Activated CD8-positive, alpha-beta memory T cell treated with anti-CD3 and anti-CD28 coated beads, Interleukin-2, amount 10 ng/mL, durations not matched to agents 7 days and 5 days (primary cell): ENCODE measurements at regions of chr15 and their contacts with region 1.

Region 1: DNA sequence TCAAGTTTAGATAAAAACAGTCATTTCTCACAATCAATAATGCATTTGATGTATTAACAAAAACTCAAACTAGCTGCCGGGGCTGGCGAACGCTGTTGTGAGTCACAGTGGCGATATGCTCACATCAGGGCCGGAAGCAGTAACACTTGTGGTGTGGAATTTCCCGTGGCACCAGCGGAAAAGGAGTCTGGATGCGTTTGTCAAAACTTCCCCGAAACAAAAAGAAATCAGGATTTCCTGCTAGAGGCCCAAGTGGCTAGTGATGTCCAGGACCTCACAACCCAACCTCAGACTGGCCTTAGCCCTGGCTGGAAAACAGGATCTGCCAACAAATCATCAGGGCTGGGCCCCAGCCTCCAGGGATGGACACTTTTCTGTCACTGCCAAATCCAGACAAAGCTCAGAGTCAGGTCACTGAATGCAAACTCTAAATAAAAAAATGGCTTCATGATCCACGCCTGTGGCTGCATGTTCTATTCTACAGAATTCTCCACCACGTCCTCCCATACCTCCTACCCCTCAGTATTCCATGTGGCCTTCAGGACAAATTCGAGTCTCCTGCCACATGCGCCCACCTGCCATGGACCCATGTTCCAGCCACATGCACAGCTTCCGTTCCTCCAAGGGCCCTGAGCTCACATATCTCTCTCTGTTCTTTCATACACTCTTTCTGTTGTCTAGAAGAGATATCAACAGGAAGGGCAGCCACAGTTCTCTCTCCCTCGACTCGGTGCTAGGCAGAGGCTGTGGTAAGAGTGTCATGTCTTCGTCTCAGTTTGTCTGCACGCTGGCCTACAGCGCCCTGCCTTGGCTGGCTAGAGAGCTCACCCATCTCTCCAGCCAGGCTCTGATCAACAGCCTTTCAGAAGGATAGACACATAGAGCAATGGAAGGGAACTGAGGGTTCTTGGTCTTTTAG is 35.4 kb downstream of the EHD4 start:
- DNase-seq: peak; percentile 89
- ATAC-seq: peak; percentile 82
- H3K4me3 Mint-ChIP-seq: peak overlapping the region; percentile 52
- H3K27ac Mint-ChIP-seq: peak overlapping the region; percentile 100
- H3K4me1 Mint-ChIP-seq: peaks cover 71% of the 10 kb centered on the region
- H3K27me3 Mint-ChIP-seq: no peaks in the 10 kb centered on the region

Region 2: DNA sequence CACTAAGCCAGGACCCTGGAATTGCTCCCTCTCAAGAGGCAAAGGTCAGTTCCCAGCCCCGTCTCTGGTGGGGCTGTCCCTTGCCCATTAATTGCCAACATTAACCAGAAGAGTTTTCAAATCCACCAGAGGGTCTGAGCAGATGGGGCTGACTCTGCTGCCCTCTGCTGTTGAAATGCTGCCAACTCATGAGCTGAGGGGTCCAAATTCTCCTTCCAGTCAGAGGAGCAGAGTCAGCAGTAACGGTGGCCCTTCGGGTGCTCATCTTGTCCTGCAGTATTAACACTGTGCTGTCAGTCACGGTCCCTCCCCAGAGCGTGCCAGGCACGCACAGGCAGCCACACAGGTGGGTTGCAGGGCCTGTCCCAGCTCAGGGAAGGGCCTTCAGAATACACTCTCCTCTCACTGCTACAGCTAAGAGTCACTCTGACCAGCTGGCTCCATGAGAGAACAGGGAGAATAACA is 32.3 kb before region 1 on chr15:
- CTCF ChIA-PET with region 1: interaction called, 21 read pairs
- DNase-seq: peak; percentile 80
- ATAC-seq: peak; percentile 92
- H3K4me3 Mint-ChIP-seq: no peak overlapping the region
- H3K27ac Mint-ChIP-seq: peak overlapping the region; percentile 74
- H3K4me1 Mint-ChIP-seq: peaks cover 18% of the 10 kb centered on the region
- H3K27me3 Mint-ChIP-seq: no peaks in the 10 kb centered on the region

Region 3: DNA sequence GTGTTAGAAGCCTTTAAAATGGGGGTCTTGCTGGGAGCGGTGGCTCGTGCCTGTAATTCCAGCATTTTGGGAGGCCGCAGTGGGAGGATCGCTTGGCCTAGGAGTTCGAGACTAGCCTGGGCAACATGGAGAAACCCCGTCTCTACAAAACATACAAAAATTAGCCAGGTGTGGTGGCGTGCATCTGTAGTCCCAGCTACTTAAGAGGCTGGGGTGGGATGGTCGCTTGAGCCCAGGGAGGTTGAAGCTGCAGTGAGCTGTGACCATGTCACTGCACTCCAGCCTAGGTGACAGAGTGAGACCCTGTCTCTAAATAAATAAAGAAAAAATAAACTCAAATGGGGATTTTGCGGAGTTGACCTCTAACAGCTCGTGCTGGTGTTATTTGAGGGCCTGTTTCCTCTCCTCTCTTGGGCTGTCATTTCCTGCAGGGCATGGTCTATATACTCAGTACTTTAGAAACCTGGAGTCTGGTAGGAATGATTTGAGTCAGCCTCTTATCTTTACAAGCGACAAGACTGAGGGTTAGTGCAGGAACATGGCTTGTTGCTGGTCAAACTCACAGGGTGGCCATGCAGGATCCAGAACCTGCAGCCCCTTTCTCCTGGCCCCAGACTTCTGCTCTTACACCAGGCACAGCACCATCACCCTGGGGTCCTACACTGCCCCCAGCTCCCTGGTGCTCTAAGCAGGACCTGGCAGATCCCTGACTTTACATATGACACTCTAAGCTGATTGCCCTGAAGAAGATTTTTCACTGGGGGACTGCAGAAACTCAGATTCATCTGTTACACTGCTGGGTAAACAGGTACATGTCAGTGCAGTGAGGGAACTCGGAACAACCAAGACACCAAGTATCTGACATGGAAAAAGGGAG is 20.4 kb after region 1 on chr15:
- CTCF ChIA-PET with region 1: interaction called, 12 read pairs
- DNase-seq: no peak
- ATAC-seq: peak; percentile 93
- H3K4me3 Mint-ChIP-seq: no peak overlapping the region
- H3K27ac Mint-ChIP-seq: peak overlapping the region; percentile 73
- H3K4me1 Mint-ChIP-seq: peaks cover 28% of the 10 kb centered on the region
- H3K27me3 Mint-ChIP-seq: no peaks in the 10 kb centered on the region

Region 4: GRCh38 chr15:41972253-41973242 is 35.6 kb after region 1 on chr15 and contains the start of gene EHD4:
- CTCF ChIA-PET with region 1: interaction called, 47 read pairs
- DNase-seq: peak; percentile 98
- ATAC-seq: peak; percentile 92
- H3K4me3 Mint-ChIP-seq: peak within 1 kb of the TSS; percentile 86
- H3K27ac Mint-ChIP-seq: peak within 1 kb of the TSS; percentile 91
- H3K4me1 Mint-ChIP-seq: peaks cover 48% of the 10 kb centered on the region
- H3K27me3 Mint-ChIP-seq: peaks cover 24% of the 10 kb centered on the region
- total RNA-seq, gene EHD4: 15.6 to 19.8 TPM